B cell (primary cell): ENCODE measurements at regions of chr1 and their contacts with region 1.

Region 1: DNA sequence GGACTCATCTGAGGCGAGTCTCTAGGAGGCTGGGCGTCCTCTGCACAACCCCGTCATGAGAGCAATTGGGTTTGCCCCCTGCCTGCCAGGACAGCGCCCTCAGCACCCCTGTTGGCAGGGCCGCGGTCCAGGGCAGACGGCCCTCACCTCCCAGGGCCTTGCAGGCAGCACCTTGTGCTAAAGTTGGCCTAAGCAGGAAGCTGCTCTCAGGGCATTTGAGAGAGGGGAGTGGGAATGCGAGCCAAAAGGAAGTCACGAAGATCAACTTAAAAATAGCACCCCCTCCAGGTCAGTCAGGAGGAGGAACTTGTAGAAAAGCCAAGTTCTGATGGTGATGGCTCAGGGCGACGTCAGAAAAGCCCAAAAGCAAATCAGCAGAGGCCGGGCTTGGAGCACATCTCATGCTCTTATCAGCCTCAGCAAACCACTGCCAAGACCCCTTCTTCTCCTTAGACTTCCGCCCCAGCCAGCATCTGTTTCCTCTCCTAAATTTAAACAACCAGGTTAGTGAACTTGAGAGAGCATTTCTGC is 12.6 kb upstream of the ADORA3 start:
- DNase-seq: peak; percentile 86
- ATAC-seq: peak; percentile 75
- H3K4me3 ChIP-seq: peak overlapping the region; percentile 55 to 75 (median 61)
- H3K4me3 Mint-ChIP-seq: peak overlapping the region; percentile 90
- H3K27ac ChIP-seq: peak overlapping the region; percentile 81
- H3K27ac Mint-ChIP-seq: peak overlapping the region; percentile 84
- H3K4me1 ChIP-seq: peaks cover 30 to 34% of the 10 kb centered on the region in 2 donors
- H3K4me1 Mint-ChIP-seq: peaks cover 37% of the 10 kb centered on the region
- H3K27me3 ChIP-seq: no peaks in the 10 kb centered on the region
- H3K27me3 Mint-ChIP-seq: no peaks in the 10 kb centered on the region
- CTCF ChIP-seq: peak; percentile 74

Region 2: DNA sequence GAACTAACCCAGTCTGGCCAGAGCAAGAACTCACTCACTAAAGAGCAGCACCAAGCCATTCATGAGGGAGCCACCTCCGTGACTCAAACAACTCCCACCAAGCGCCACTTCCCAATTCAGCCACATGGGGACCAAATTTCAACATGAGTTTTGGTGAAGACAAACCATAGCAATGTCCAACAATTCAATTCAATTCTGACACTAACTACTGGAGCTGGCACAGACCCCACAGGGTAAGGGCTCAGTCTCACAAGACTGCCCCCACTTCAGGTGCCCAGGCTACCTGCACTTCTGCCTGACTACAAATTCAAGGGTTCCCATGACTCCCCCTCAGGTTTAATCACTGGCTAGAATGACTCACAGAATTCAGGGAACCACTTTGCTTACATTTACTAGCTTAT is 54.7 kb after region 1 on chr1:
- CTCF ChIA-PET with region 1: interaction called, 4 read pairs
- POLR2A ChIA-PET with region 1: no interaction called
- intact Hi-C with region 1: loop called (anchors 5 kb)
- DNase-seq: peak; percentile 48
- ATAC-seq: peak; percentile 43
- H3K4me3 ChIP-seq: no peak overlapping the region
- H3K4me3 Mint-ChIP-seq: no peak overlapping the region
- H3K27ac ChIP-seq: no peak overlapping the region
- H3K27ac Mint-ChIP-seq: peak overlapping the region; percentile 26
- H3K4me1 ChIP-seq: peaks cover 6 to 14% of the 10 kb centered on the region in 2 donors
- H3K4me1 Mint-ChIP-seq: peaks cover 15% of the 10 kb centered on the region
- H3K27me3 ChIP-seq: no peaks in the 10 kb centered on the region
- H3K27me3 Mint-ChIP-seq: no peaks in the 10 kb centered on the region
- CTCF ChIP-seq: peak; percentile 53

Region 3: DNA sequence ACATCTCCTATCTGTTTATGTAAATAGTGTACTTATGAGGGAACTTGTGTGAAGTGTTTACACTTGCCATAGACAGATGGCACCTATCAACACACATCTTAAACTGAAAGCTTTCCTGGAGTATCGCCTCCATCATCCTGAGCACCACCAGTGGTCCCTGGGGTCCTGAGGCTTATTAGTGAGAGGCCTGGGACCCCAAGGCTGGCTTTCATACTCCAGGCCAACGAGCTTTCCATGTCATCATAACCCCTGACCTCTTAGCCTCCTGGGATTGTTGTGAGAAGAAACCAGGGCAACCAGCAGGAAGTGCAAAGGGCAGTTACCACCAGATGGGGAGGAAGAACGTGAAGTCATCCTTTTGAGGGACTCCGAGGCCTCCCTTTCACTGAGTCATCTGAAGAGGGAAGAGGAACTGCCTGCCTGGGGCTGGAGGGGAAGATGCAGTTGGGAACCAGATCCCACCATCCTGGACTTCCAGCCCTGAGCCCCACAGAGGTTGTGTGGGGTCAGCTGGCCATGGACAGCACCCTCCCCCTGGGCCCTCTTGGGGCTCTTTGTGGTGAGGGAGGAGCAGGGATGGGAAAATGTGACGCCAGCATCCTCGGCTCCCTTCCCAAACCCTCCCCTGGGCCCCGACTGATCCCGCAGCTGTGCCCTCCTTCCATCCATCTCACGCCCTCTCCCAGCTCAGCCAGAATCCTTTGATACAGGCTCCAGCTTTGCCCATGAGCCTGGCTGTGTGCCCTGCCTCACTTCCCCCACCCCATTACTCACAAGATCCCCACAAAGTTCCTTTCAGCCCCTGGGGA is 217.3 kb after region 1 on chr1:
- CTCF ChIA-PET with region 1: no interaction called
- POLR2A ChIA-PET with region 1: no interaction called
- intact Hi-C with region 1: no loop called
- DNase-seq: no peak
- ATAC-seq: no peak
- H3K4me3 ChIP-seq: no peak overlapping the region
- H3K4me3 Mint-ChIP-seq: no peak overlapping the region
- H3K27ac ChIP-seq: no peak overlapping the region
- H3K27ac Mint-ChIP-seq: no peak overlapping the region
- H3K4me1 ChIP-seq: peaks cover 7 to 18% of the 10 kb centered on the region in 2 donors
- H3K4me1 Mint-ChIP-seq: peaks cover 13% of the 10 kb centered on the region
- H3K27me3 ChIP-seq: peaks cover 0 to 16% (median 4%) of the 10 kb centered on the region in 4 experiments
- H3K27me3 Mint-ChIP-seq: no peaks in the 10 kb centered on the region
- CTCF ChIP-seq: no peak